ENCODE measurements at regions of chr3 and their contacts with region 1.

Region 1: GRCh38 chr3:18559331-18559842 is 134.2 kb upstream of the SATB1 start:
- DNase-seq: peak; percentile 51
- H3K4me3 Mint-ChIP-seq: peak overlapping the region; percentile 14
- H3K27ac Mint-ChIP-seq: peak overlapping the region; percentile 93
- H3K4me1 Mint-ChIP-seq: peaks cover 80% of the 10 kb centered on the region
- H3K27me3 Mint-ChIP-seq: no peaks in the 10 kb centered on the region

Region 2: GRCh38 chr3:18444595-18445400 is 114.6 kb before region 1 on chr3:
- CTCF ChIA-PET with region 1: interaction called, 6 read pairs
- POLR2A ChIA-PET with region 1: interaction called, 12 read pairs
- intact Hi-C with region 1: loop called (anchors 1 kb)
- DNase-seq: peak; percentile 87
- H3K4me3 Mint-ChIP-seq: peak overlapping the region; percentile 99
- H3K27ac Mint-ChIP-seq: peak overlapping the region; percentile 99
- H3K4me1 Mint-ChIP-seq: peaks cover 36% of the 10 kb centered on the region
- H3K27me3 Mint-ChIP-seq: no peaks in the 10 kb centered on the region

Region 3: DNA sequence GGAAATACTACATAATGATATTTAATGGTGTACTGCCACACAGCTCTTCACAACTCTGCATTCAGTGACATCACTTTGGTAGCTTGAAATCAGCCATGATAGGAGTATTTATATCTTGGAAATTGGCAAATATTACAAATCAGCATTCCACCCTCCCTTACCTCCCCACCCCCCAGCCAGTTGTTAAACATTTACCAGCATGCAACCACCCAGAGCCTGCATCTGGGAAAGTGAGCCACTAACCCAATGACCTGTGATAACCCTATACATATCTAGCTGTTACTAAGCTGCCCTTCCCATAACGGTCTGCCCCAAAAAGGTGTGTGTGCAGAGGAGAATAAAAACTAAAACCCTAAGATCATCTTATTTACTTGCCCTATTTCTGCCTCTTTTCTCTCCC is 89.6 kb before region 1 on chr3:
- CTCF ChIA-PET with region 1: no interaction called
- POLR2A ChIA-PET with region 1: no interaction called
- intact Hi-C with region 1: no loop called
- DNase-seq: no peak
- H3K4me3 Mint-ChIP-seq: no peak overlapping the region
- H3K27ac Mint-ChIP-seq: no peak overlapping the region
- H3K4me1 Mint-ChIP-seq: no peaks in the 10 kb centered on the region
- H3K27me3 Mint-ChIP-seq: no peaks in the 10 kb centered on the region

Region 4: DNA sequence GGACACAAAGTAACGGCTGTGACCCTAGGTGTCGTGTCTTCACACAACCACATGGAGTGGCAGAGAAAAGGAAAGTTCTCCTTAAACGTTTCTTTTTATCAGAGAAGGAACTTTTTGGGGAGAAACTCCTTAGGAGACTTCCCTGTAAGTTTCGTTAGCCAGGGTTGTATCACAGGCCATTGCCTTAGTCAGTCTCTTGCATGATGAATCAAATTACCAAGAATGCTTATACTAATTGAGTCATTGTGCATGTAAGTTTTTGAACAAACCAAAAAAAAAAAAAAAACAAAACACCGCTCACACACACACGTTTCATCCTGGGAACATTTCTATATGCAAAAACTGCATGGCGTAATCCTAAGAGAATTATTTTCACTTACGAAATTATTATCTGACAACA is 16.2 kb after region 1 on chr3:
- CTCF ChIA-PET with region 1: interaction called, 19 read pairs
- POLR2A ChIA-PET with region 1: no interaction called
- intact Hi-C with region 1: no loop called
- DNase-seq: no peak
- H3K4me3 Mint-ChIP-seq: no peak overlapping the region
- H3K27ac Mint-ChIP-seq: no peak overlapping the region
- H3K4me1 Mint-ChIP-seq: peaks cover 15% of the 10 kb centered on the region
- H3K27me3 Mint-ChIP-seq: no peaks in the 10 kb centered on the region

Region 5: GRCh38 chr3:18591120-18591519 is 31.7 kb after region 1 on chr3:
- CTCF ChIA-PET with region 1: no interaction called
- POLR2A ChIA-PET with region 1: no interaction called
- intact Hi-C with region 1: no loop called
- DNase-seq: no peak
- H3K4me3 Mint-ChIP-seq: no peak overlapping the region
- H3K27ac Mint-ChIP-seq: no peak overlapping the region
- H3K4me1 Mint-ChIP-seq: no peaks in the 10 kb centered on the region
- H3K27me3 Mint-ChIP-seq: no peaks in the 10 kb centered on the region

Region 6: GRCh38 chr3:18679238-18679637 is 119.9 kb after region 1 on chr3:
- CTCF ChIA-PET with region 1: interaction called, 7 read pairs
- POLR2A ChIA-PET with region 1: interaction called, 11 read pairs
- intact Hi-C with region 1: loop called (anchors 1 kb)
- DNase-seq: peak; percentile 75
- H3K4me3 Mint-ChIP-seq: peak overlapping the region; percentile 53
- H3K27ac Mint-ChIP-seq: peak overlapping the region; percentile 90
- H3K4me1 Mint-ChIP-seq: peaks cover 81% of the 10 kb centered on the region
- H3K27me3 Mint-ChIP-seq: no peaks in the 10 kb centered on the region

Region 7: DNA sequence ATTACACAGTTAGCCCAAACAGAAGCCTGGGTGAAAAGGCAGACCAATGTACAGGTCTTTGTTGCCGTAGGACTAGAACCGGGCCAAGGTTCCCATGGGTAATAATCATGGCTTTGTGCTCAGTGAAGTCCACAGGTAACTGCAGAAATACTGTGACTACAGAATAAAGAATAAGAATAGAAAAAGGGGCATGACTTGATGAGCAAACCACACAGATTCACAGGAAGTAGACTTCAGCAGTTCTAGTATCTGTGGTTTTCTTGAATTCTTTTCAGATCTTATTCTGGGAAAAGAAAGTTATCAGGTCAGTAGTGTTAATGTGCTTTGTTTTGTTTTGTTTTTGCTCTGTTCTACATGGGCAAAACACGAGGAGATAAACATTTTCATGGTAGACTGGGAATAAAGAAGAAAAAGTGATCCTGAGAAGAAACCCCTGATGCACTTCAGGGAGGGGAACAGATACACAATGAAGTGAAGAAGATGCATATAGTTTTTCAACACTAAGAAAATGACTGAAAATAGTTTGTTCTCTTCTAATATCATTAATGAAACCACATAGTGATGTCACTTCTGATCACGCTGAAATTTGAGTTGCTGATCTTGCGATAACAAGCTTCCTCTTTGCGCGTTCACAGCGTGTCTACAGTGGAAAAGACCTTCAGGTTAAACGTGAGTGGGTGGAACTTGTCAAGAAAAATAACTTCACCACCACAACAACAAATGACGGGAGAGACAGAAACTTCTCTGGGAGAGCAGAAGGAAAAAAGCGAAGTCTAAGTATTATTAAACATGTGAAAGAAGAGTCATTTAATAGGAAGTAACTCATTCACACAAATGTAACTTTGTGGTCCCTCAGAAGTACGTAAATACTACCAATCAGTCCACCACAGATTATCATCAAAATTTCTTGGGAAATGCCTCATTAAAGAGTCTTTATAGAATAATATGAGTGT is 181.5 kb after region 1 on chr3:
- CTCF ChIA-PET with region 1: interaction called, 17 read pairs
- POLR2A ChIA-PET with region 1: interaction called, 33 read pairs
- intact Hi-C with region 1: loop called (anchors 1 kb)
- DNase-seq: peak; percentile 76
- H3K4me3 Mint-ChIP-seq: peak overlapping the region; percentile 36
- H3K27ac Mint-ChIP-seq: peak overlapping the region; percentile 92
- H3K4me1 Mint-ChIP-seq: peaks cover 92% of the 10 kb centered on the region
- H3K27me3 Mint-ChIP-seq: no peaks in the 10 kb centered on the region

Region 8: GRCh38 chr3:18795078-18795477 is 235.7 kb after region 1 on chr3:
- CTCF ChIA-PET with region 1: no interaction called
- POLR2A ChIA-PET with region 1: no interaction called
- intact Hi-C with region 1: no loop called
- DNase-seq: no peak
- H3K4me3 Mint-ChIP-seq: no peak overlapping the region
- H3K27ac Mint-ChIP-seq: no peak overlapping the region
- H3K4me1 Mint-ChIP-seq: peaks cover 3% of the 10 kb centered on the region
- H3K27me3 Mint-ChIP-seq: no peaks in the 10 kb centered on the region

Region 9: GRCh38 chr3:18988614-18989229 is 429.3 kb after region 1 on chr3:
- CTCF ChIA-PET with region 1: no interaction called
- POLR2A ChIA-PET with region 1: no interaction called
- intact Hi-C with region 1: loop called (anchors 2 kb)
- DNase-seq: no peak
- H3K4me3 Mint-ChIP-seq: no peak overlapping the region
- H3K27ac Mint-ChIP-seq: no peak overlapping the region
- H3K4me1 Mint-ChIP-seq: peaks cover 15% of the 10 kb centered on the region
- H3K27me3 Mint-ChIP-seq: peaks cover 25% of the 10 kb centered on the region